ENCODE measurements at regions of chr14 and their contacts with region 1.

Region 1: DNA sequence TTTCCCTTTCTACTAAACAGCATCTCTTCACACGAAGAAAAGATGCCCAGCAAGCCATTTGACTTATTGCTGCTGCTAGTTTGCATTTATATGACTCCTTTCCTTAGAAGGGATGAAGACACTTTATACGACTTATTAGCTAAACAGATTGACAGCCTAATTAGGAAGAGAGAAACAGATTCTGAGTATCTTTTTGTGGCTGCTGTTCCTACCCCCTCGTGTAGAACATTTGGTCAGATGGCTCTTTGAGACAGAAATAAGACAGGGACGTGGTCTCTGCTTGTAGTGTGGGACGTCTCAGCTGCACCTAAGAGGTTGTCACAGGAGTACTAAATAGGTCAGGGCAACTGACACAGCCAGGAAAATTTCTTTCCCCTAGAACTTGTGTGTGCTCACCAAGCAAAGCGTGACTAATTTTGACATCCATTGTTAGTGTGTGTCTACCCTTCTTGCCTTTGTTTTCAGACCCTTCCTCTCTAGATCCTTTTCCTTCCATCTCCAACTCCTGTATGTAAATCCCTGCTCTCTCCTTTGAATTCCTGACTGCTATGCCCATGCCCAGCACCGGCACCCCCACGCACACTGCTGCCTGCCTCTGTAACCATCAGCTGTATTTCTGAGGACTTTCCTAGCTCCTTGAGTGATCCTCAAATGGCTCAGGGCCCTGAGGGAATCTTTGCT is 83.2 kb downstream of the DAD1 start:
- DNase-seq: peak in 3 of 9 experiments; percentile 48 to 65 (median 48)
- ATAC-seq: peak; percentile 38
- H3K4me3 ChIP-seq: peak overlapping the region; percentile 49 to 53
- H3K4me3 Mint-ChIP-seq: peak overlapping the region; percentile 81
- H3K27ac ChIP-seq: peak overlapping the region; percentile 72 to 82
- H3K27ac Mint-ChIP-seq: peak overlapping the region; percentile 99
- H3K4me1 ChIP-seq: peaks cover 51% of the 10 kb centered on the region
- H3K4me1 Mint-ChIP-seq: peaks cover 78% of the 10 kb centered on the region
- H3K27me3 ChIP-seq: no peaks in the 10 kb centered on the region
- H3K27me3 Mint-ChIP-seq: no peaks in the 10 kb centered on the region
- CTCF ChIP-seq: no peak

Region 2: GRCh38 chr14:21868442-21869046 is 637.3 kb before region 1 on chr14:
- CTCF ChIA-PET with region 1: no interaction called
- POLR2A ChIA-PET with region 1: interaction called, 4 read pairs
- intact Hi-C with region 1: loop called in 1 of 2 experiments (anchors 10 kb)
- DNase-seq: peak; percentile 53 to 84 (median 74)
- ATAC-seq: peak; percentile 91
- H3K4me3 ChIP-seq: peak overlapping the region in 1 of 2 experiments; percentile 2
- H3K4me3 Mint-ChIP-seq: peak overlapping the region; percentile 65
- H3K27ac ChIP-seq: no peak overlapping the region
- H3K27ac Mint-ChIP-seq: peak overlapping the region; percentile 80
- H3K4me1 ChIP-seq: peaks cover 5% of the 10 kb centered on the region
- H3K4me1 Mint-ChIP-seq: peaks cover 29% of the 10 kb centered on the region
- H3K27me3 ChIP-seq: no peaks in the 10 kb centered on the region
- H3K27me3 Mint-ChIP-seq: no peaks in the 10 kb centered on the region
- CTCF ChIP-seq: peak; percentile 81

Region 3: GRCh38 chr14:22002860-22003309 is 503.0 kb before region 1 on chr14:
- CTCF ChIA-PET with region 1: interaction called, 5 read pairs
- POLR2A ChIA-PET with region 1: interaction called, 3 read pairs
- intact Hi-C with region 1: loop called in 1 of 2 experiments (anchors 10 kb)
- DNase-seq: peak; percentile 39 to 84 (median 70)
- ATAC-seq: peak; percentile 76
- H3K4me3 ChIP-seq: peak overlapping the region; percentile 17 to 28
- H3K4me3 Mint-ChIP-seq: peak overlapping the region; percentile 67
- H3K27ac ChIP-seq: peak overlapping the region; percentile 50 to 67
- H3K27ac Mint-ChIP-seq: peak overlapping the region; percentile 93
- H3K4me1 ChIP-seq: peaks cover 20% of the 10 kb centered on the region
- H3K4me1 Mint-ChIP-seq: peaks cover 28% of the 10 kb centered on the region
- H3K27me3 ChIP-seq: no peaks in the 10 kb centered on the region
- H3K27me3 Mint-ChIP-seq: no peaks in the 10 kb centered on the region
- CTCF ChIP-seq: peak; percentile 32

Region 4: DNA sequence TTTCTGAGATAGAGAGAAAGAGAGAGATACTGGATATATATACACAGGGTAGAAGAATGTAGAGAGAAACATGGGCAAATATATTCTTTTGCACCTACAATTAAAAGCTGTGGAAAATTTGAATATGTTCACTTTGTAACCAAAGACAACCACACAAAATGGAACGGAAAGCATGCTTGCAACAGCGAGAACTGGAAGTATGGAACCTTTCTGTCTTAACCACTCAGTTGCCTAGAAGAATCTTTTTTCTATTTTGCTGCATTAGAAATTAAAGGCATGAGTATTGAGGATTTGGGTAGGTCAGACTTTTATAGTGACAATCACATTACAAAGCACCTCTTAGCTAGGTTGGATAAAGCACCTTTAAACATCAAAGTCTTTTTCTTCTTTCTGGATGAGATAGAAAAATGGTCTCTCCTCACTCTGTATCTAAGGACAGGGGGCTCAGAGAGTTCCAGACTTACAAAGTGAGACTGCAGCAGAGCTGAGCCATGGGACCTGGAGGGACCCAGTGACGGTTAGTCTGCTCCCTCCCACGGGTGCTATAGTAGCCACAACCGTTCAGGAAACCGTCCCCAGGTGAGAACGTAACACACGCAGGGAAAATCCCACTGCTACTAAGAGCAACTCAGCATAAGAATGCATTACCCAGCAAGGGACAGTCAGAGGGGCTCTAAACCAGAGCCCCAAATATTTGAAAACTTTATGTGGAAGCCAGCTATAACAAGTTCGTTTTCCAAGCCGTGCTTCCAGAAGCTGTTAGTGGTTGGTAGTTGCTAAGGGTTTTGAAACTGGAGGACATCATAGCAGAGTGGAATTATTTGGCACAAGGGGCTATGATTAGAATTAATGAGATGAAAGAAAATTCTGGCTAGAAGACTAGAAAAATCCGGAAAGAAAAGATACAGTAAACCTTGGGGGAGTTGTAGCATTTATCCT is 13.9 kb before region 1 on chr14:
- CTCF ChIA-PET with region 1: no interaction called
- POLR2A ChIA-PET with region 1: interaction called, 30 read pairs
- intact Hi-C with region 1: no loop called
- DNase-seq: peak in 4 of 9 experiments; percentile 43 to 83 (median 56)
- ATAC-seq: peak; percentile 43
- H3K4me3 ChIP-seq: peak overlapping the region; percentile 33 to 53
- H3K4me3 Mint-ChIP-seq: peak overlapping the region; percentile 84
- H3K27ac ChIP-seq: peak overlapping the region; percentile 32 to 77
- H3K27ac Mint-ChIP-seq: peak overlapping the region; percentile 99
- H3K4me1 ChIP-seq: no peaks in the 10 kb centered on the region
- H3K4me1 Mint-ChIP-seq: peaks cover 34% of the 10 kb centered on the region
- H3K27me3 ChIP-seq: no peaks in the 10 kb centered on the region
- H3K27me3 Mint-ChIP-seq: no peaks in the 10 kb centered on the region
- CTCF ChIP-seq: no peak

Region 5: DNA sequence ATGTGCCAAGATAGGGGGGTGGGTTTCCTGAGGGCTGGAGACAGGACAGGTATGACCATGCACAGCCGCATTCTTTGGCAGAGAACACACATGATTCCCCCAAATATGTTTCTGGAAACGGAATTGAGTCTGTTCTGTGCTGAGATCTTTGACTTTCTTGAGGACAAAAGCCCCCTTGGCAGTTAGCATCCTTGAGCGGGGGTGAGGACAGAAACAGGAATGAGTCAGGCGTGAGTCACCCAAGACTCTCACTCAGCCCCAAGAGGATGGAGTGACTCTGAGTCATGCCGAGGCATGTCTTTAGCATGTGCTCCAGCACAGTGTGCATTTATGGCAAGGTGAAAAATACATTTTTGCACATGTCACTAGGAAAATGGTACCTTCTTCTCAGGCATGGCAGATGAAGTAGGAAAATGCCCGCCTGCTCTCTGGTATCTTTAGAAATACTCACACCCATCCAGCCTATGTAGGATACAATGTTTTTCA is 31.1 kb after region 1 on chr14:
- CTCF ChIA-PET with region 1: interaction called, 5 read pairs
- POLR2A ChIA-PET with region 1: interaction called, 274 read pairs
- intact Hi-C with region 1: loop called in 1 of 2 experiments (anchors 5 kb)
- DNase-seq: peak in 8 of 9 experiments; percentile 65 to 93 (median 82)
- ATAC-seq: peak; percentile 86
- H3K4me3 ChIP-seq: peak overlapping the region; percentile 38
- H3K4me3 Mint-ChIP-seq: peak overlapping the region; percentile 76
- H3K27ac ChIP-seq: peak overlapping the region; percentile 50 to 83
- H3K27ac Mint-ChIP-seq: peak overlapping the region; percentile 93
- H3K4me1 ChIP-seq: peaks cover 98% of the 10 kb centered on the region
- H3K4me1 Mint-ChIP-seq: peaks cover 96% of the 10 kb centered on the region
- H3K27me3 ChIP-seq: no peaks in the 10 kb centered on the region
- H3K27me3 Mint-ChIP-seq: no peaks in the 10 kb centered on the region
- CTCF ChIP-seq: no peak

Measured in CD8-positive, alpha-beta T cell (primary cell).